Activated CD4-positive, alpha-beta T cell treated with anti-CD3 and anti-CD28 coated beads, Interleukin-2, amount 10 ng/mL, durations not matched to agents 24 days and 14 days (primary cell): ENCODE measurements at regions of chr3 and their contacts with region 1.

Region 1: GRCh38 chr3:130971208-130971607 is 55.4 kb downstream of the ASTE1 start:
- DNase-seq: no peak
- H3K4me3 Mint-ChIP-seq: no peak overlapping the region
- H3K27ac Mint-ChIP-seq: peak overlapping the region; percentile 61
- H3K4me1 Mint-ChIP-seq: peaks cover 10% of the 10 kb centered on the region
- H3K27me3 Mint-ChIP-seq: no peaks in the 10 kb centered on the region

Region 2: DNA sequence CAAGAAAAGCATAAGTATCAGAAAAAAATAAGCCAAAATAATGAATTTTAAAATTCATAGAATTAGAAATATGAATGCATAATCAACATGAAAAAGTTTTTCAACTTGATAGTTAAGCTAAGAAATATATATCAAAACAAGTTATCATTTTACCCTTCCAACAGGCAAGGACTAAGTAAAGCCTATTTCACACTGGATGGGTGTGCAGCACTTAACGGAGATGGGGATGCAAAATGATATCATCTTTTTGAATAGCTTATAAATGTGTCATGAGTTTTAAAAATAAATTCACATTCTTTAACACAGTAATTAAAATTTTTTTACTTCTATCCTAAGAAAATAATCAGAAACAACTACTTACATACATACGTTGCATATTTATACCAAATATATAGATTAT is 245.5 kb before region 1 on chr3:
- intact Hi-C with region 1: no loop called
- DNase-seq: no peak
- H3K4me3 Mint-ChIP-seq: no peak overlapping the region
- H3K27ac Mint-ChIP-seq: no peak overlapping the region
- H3K4me1 Mint-ChIP-seq: peaks cover 6% of the 10 kb centered on the region
- H3K27me3 Mint-ChIP-seq: no peaks in the 10 kb centered on the region

Region 3: GRCh38 chr3:130850044-130850797 is 121.0 kb before region 1 on chr3:
- intact Hi-C with region 1: loop called (anchors 1 kb)
- DNase-seq: peak; percentile 87
- H3K4me3 Mint-ChIP-seq: peak overlapping the region; percentile 64
- H3K27ac Mint-ChIP-seq: peak overlapping the region; percentile 75
- H3K4me1 Mint-ChIP-seq: peaks cover 26% of the 10 kb centered on the region
- H3K27me3 Mint-ChIP-seq: peaks cover 34% of the 10 kb centered on the region